B cell (primary cell): ENCODE measurements at regions of chr15 and their contacts with region 1.

Region 1: GRCh38 chr15:42084460-42085235 is 9.7 kb downstream of the PLA2G4D start:
- DNase-seq: peak; percentile 66
- ATAC-seq: peak; percentile 70
- H3K4me3 ChIP-seq: no peak overlapping the region
- H3K4me3 Mint-ChIP-seq: no peak overlapping the region
- H3K27ac ChIP-seq: no peak overlapping the region
- H3K27ac Mint-ChIP-seq: no peak overlapping the region
- H3K4me1 ChIP-seq: peaks cover 0 to 7% of the 10 kb centered on the region in 2 donors
- H3K4me1 Mint-ChIP-seq: peaks cover 4% of the 10 kb centered on the region
- H3K27me3 ChIP-seq: peaks cover 0 to 20% (median 2%) of the 10 kb centered on the region in 4 experiments
- H3K27me3 Mint-ChIP-seq: peaks cover 24% of the 10 kb centered on the region
- CTCF ChIP-seq: peak; percentile 85

Region 2: DNA sequence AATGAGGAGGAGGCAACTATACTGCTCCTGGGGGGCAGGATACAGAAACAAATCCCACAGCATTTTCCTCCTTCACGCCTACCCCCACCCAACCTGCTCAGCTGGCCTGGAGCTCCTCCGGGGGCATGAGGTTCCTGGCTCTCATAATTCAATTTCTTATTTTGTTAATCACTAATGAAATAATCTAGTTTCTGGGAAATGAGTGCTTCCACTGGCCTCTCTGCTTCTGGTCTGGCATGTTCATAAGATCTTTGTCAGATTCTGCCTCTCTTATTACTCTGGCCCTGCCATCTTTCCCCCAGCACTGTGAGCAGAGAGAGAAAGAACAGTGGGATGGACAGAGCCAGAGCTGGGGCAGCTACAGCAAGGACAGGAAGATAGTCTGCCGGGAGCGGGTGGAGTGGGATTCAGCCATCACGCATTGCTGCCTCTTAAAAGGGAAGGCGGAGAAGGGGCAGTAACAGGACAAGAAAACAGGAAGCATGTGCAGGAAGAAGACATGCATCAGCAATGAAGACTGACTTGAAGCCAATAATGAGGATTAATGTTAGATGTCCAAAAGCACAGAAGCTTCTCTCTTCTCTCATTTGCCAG is 554.2 kb before region 1 on chr15:
- CTCF ChIA-PET with region 1: no interaction called
- POLR2A ChIA-PET with region 1: no interaction called
- intact Hi-C with region 1: no loop called
- DNase-seq: peak; percentile 32
- ATAC-seq: peak; percentile 17
- H3K4me3 ChIP-seq: no peak overlapping the region
- H3K4me3 Mint-ChIP-seq: peak overlapping the region; percentile 18
- H3K27ac ChIP-seq: peak overlapping the region; percentile 56 to 74
- H3K27ac Mint-ChIP-seq: peak overlapping the region; percentile 77
- H3K4me1 ChIP-seq: peaks cover 16 to 25% of the 10 kb centered on the region in 2 donors
- H3K4me1 Mint-ChIP-seq: peaks cover 17% of the 10 kb centered on the region
- H3K27me3 ChIP-seq: no peaks in the 10 kb centered on the region
- H3K27me3 Mint-ChIP-seq: no peaks in the 10 kb centered on the region
- CTCF ChIP-seq: no peak

Region 3: DNA sequence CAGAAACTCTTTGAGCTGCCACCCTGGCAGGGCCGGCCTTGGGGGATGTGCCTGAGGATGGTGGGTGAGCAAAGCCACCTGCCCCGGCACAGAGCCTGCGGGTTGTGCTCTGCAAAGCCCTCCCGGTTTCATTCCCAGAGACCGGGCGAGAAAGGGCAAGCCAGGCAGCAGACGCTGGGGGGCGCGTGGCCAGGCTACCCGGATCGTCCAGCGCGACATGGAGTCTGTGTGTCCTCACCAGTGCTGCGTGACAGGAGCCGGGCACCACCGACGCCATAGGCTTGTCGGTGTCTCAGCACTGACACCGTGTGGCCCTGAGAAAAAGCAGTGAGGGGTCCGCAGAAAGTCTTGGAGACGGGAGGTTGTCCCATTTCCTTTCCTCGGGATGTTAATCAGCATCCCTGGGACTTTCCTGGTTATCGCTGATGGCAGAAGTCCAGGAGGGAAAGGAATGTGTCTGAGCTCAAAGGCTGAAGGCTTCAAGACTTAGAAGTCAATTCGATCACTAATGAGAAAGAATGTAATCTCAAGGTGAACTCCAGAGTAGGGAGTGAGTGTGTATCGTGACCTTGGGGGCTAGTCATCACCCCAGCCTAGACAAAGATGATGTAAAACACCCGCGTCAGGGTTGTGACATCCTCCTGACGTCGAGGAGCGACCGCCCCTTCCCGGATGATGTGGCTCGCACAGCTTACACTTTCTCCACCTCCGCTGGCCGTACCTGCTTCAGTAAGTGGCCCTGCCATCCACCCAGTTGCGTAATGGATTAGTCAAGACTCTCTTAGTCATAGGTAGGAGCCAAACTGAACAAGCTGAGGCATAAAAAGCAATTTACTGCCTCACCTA is 27.5 kb before region 1 on chr15:
- CTCF ChIA-PET with region 1: interaction called, 24 read pairs
- POLR2A ChIA-PET with region 1: no interaction called
- intact Hi-C with region 1: no loop called
- DNase-seq: peak; percentile 58
- ATAC-seq: peak; percentile 68
- H3K4me3 ChIP-seq: peak overlapping the region in 4 of 5 experiments; percentile 15 to 39 (median 28)
- H3K4me3 Mint-ChIP-seq: peak overlapping the region; percentile 4
- H3K27ac ChIP-seq: no peak overlapping the region
- H3K27ac Mint-ChIP-seq: no peak overlapping the region
- H3K4me1 ChIP-seq: peaks cover 7% of the 10 kb centered on the region in 2 donors
- H3K4me1 Mint-ChIP-seq: peaks cover 9% of the 10 kb centered on the region
- H3K27me3 ChIP-seq: peaks cover 0 to 26% (median 13%) of the 10 kb centered on the region in 4 experiments
- H3K27me3 Mint-ChIP-seq: peaks cover 31% of the 10 kb centered on the region
- CTCF ChIP-seq: peak; percentile 20

Region 4: DNA sequence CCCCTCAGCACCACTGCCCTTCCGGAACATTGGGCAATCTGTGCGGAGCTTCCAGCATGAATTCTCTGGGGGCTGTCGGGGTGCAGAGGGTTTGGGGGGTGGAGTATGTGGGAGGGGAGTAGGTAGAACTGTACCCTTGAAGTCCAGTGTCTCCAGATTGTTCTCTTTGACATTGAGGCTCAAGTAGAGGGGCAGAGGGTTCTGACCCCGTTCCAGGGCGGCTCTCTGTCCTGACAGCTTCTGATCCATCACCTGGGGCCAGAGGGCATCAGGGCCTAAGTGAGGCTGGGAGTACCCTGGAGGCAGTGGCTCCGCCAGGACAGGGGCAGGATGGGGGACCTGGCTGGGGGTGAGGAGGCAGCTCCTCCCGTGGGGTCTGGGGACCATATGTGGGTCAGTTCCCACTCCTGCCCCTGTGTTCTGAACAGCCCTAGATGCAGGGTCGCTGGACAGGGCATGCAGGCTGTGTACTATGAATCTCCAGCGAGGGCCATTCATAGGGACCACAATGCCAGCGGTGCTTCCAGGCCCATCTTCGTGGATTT is 12.4 kb before region 1 on chr15:
- CTCF ChIA-PET with region 1: interaction called, 22 read pairs
- POLR2A ChIA-PET with region 1: no interaction called
- intact Hi-C with region 1: no loop called
- DNase-seq: no peak
- ATAC-seq: no peak
- H3K4me3 ChIP-seq: no peak overlapping the region
- H3K4me3 Mint-ChIP-seq: no peak overlapping the region
- H3K27ac ChIP-seq: no peak overlapping the region
- H3K27ac Mint-ChIP-seq: no peak overlapping the region
- H3K4me1 ChIP-seq: no peaks in the 10 kb centered on the region
- H3K4me1 Mint-ChIP-seq: no peaks in the 10 kb centered on the region
- H3K27me3 ChIP-seq: no peaks in the 10 kb centered on the region
- H3K27me3 Mint-ChIP-seq: peaks cover 20% of the 10 kb centered on the region
- CTCF ChIP-seq: no peak

Region 5: DNA sequence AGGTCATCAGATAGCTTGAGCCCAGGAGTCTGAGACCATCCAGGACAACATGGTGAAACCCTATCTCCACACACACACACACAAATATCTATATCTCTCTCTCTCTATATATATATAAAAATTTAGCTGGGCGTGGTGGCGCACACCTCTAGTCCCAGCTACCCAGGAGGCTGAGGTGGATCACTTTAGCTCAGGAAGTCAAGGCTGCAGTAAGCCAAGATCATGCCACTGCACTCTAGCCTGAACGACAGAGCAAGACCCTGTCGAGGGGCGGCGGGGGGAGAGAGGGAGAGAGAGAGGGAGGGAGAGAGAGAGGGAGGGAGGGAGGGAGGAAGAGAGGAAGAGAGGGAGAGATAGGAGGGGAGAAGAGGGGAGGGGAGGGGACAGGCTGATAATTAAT is 43.8 kb after region 1 on chr15:
- CTCF ChIA-PET with region 1: no interaction called
- POLR2A ChIA-PET with region 1: no interaction called
- intact Hi-C with region 1: no loop called
- DNase-seq: no peak
- ATAC-seq: no peak
- H3K4me3 ChIP-seq: no peak overlapping the region
- H3K4me3 Mint-ChIP-seq: no peak overlapping the region
- H3K27ac ChIP-seq: no peak overlapping the region
- H3K27ac Mint-ChIP-seq: no peak overlapping the region
- H3K4me1 ChIP-seq: no peaks in the 10 kb centered on the region
- H3K4me1 Mint-ChIP-seq: no peaks in the 10 kb centered on the region
- H3K27me3 ChIP-seq: peaks cover 0 to 11% (median 3%) of the 10 kb centered on the region in 4 experiments
- H3K27me3 Mint-ChIP-seq: peaks cover 32% of the 10 kb centered on the region
- CTCF ChIP-seq: no peak

Region 6: GRCh38 chr15:42182961-42183360 is 98.3 kb after region 1 on chr15:
- CTCF ChIA-PET with region 1: no interaction called
- POLR2A ChIA-PET with region 1: no interaction called
- intact Hi-C with region 1: no loop called
- DNase-seq: no peak
- ATAC-seq: no peak
- H3K4me3 ChIP-seq: no peak overlapping the region
- H3K4me3 Mint-ChIP-seq: no peak overlapping the region
- H3K27ac ChIP-seq: no peak overlapping the region
- H3K27ac Mint-ChIP-seq: peak overlapping the region; percentile 47
- H3K4me1 ChIP-seq: peaks cover 0 to 4% of the 10 kb centered on the region in 2 donors
- H3K4me1 Mint-ChIP-seq: peaks cover 7% of the 10 kb centered on the region
- H3K27me3 ChIP-seq: no peaks in the 10 kb centered on the region
- H3K27me3 Mint-ChIP-seq: no peaks in the 10 kb centered on the region
- CTCF ChIP-seq: no peak

Region 7: DNA sequence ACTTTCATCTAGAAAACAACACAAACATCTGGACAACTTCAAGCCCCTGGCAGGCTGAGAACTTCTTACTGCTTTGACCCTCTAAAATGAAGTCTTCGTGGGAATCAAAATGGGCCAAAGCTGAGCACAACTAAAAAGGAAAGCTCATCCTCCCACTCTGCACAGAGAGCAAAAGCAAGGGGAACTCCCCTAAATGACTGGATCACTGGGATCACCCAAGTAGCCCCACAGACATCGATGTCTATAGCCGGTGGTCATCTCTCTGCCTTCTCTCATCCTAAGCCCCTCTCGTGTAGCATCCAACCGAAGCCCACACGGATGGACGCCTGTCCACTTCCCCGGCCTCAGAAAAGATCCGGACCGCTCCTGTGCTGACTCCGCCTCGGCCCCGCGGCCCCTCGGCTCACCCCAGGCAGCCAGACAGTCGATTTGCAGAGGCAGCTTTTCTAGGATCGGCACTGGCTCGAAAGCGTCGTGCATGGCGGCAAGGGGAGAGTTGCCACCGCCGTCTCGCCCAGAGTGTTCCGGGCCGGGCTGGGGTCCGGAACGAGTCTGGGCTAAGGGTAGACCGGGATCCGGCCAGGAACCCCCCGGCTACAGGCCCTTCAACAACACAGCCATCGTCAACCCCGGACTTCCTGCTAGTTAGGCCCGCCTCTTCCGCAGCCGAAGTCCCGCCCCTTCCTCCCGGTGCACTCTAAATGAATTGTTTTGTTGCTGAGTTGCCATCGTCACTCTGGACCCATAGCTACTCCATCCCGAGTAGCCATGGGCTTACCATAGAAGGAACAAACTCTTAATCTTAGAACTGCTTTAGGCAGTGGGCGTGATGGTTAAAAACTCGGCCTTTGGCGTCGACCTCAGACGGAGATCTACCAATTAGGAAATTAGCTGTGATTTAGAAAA is 123.3 kb after region 1 on chr15 and contains the start of gene VPS39:
- CTCF ChIA-PET with region 1: no interaction called
- POLR2A ChIA-PET with region 1: no interaction called
- intact Hi-C with region 1: no loop called
- DNase-seq: peak; percentile 86
- ATAC-seq: peak; percentile 97
- H3K4me3 ChIP-seq: peak within 1 kb of the TSS; percentile 83 to 97 (median 92)
- H3K4me3 Mint-ChIP-seq: peak within 1 kb of the TSS; percentile 85
- H3K27ac ChIP-seq: peak within 1 kb of the TSS; percentile 59 to 91
- H3K27ac Mint-ChIP-seq: peak within 1 kb of the TSS; percentile 91
- H3K4me1 ChIP-seq: peaks cover 20 to 22% of the 10 kb centered on the region in 2 donors
- H3K4me1 Mint-ChIP-seq: peaks cover 36% of the 10 kb centered on the region
- H3K27me3 ChIP-seq: no peaks in the 10 kb centered on the region
- H3K27me3 Mint-ChIP-seq: no peaks in the 10 kb centered on the region
- CTCF ChIP-seq: no peak
- total RNA-seq, gene VPS39: 145 and 149 TPM in 2 replicates